ENCODE measurements at regions of chr15 and their contacts with region 1.

Region 1: GRCh38 chr15:76139368-76140073 is 79.7 kb downstream of the TMEM266 start:
- DNase-seq: peak; percentile 81
- H3K4me3 ChIP-seq: peak overlapping the region in 1 of 2 experiments; percentile 46; a peak in 1 of 4 replicates
- H3K27ac ChIP-seq: no peak overlapping the region
- H3K4me1 ChIP-seq: peaks cover 0 to 2% of the 10 kb centered on the region in 2 experiments; a peak in 1 of 4 replicates
- H3K27me3 ChIP-seq: peaks cover 2% of the 10 kb centered on the region; the same call in 1 of the 2 replicates
- CTCF ChIP-seq: peak; percentile 83
- EP300 ChIP-seq: no peak
- RAD21 ChIP-seq: peak; percentile 89

Region 2: GRCh38 chr15:75809986-75810750 is 329.4 kb before region 1 on chr15:
- CTCF ChIA-PET with region 1: interaction called, 16 read pairs
- POLR2A ChIA-PET with region 1: interaction called, 3 read pairs
- DNase-seq: peak; percentile 39
- H3K4me3 ChIP-seq: no peak overlapping the region
- H3K27ac ChIP-seq: no peak overlapping the region
- H3K4me1 ChIP-seq: no peaks in the 10 kb centered on the region
- H3K27me3 ChIP-seq: no peaks in the 10 kb centered on the region
- CTCF ChIP-seq: peak; percentile 51
- EP300 ChIP-seq: no peak
- RAD21 ChIP-seq: peak; percentile 73

Region 3: DNA sequence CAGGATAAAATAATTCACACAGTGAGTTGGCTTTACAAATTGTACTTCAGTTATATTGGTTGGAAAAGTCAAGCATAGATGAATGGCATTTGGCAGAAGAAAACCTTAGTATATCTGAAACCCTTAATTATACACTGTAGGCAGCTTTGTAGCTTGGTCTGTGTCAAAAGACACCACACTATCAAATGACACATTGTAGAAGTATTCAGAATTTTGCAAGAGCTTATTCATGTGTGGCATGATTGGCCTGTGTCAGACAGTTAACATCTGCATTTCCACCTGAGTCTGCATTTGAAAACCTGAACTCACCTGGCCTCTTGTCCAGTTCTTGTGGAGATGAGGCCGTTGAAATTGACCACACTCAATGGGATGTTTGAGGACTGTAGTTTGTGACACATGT is 65.9 kb before region 1 on chr15:
- CTCF ChIA-PET with region 1: interaction called, 10 read pairs
- POLR2A ChIA-PET with region 1: no interaction called
- DNase-seq: no peak
- H3K4me3 ChIP-seq: no peak overlapping the region
- H3K27ac ChIP-seq: no peak overlapping the region
- H3K4me1 ChIP-seq: no peaks in the 10 kb centered on the region
- H3K27me3 ChIP-seq: no peaks in the 10 kb centered on the region; the same call in 1 of the 2 replicates
- CTCF ChIP-seq: no peak
- EP300 ChIP-seq: no peak
- RAD21 ChIP-seq: no peak

Region 4: GRCh38 chr15:76127880-76128279 is 11.6 kb before region 1 on chr15:
- CTCF ChIA-PET with region 1: interaction called, 74 read pairs
- POLR2A ChIA-PET with region 1: no interaction called
- DNase-seq: no peak
- H3K4me3 ChIP-seq: no peak overlapping the region
- H3K27ac ChIP-seq: no peak overlapping the region
- H3K4me1 ChIP-seq: no peaks in the 10 kb centered on the region
- H3K27me3 ChIP-seq: peaks cover 22% of the 10 kb centered on the region; the same call in 1 of the 2 replicates
- CTCF ChIP-seq: no peak
- EP300 ChIP-seq: no peak
- RAD21 ChIP-seq: no peak